ENCODE measurements at regions of chr11 and their contacts with region 1.

Region 1: DNA sequence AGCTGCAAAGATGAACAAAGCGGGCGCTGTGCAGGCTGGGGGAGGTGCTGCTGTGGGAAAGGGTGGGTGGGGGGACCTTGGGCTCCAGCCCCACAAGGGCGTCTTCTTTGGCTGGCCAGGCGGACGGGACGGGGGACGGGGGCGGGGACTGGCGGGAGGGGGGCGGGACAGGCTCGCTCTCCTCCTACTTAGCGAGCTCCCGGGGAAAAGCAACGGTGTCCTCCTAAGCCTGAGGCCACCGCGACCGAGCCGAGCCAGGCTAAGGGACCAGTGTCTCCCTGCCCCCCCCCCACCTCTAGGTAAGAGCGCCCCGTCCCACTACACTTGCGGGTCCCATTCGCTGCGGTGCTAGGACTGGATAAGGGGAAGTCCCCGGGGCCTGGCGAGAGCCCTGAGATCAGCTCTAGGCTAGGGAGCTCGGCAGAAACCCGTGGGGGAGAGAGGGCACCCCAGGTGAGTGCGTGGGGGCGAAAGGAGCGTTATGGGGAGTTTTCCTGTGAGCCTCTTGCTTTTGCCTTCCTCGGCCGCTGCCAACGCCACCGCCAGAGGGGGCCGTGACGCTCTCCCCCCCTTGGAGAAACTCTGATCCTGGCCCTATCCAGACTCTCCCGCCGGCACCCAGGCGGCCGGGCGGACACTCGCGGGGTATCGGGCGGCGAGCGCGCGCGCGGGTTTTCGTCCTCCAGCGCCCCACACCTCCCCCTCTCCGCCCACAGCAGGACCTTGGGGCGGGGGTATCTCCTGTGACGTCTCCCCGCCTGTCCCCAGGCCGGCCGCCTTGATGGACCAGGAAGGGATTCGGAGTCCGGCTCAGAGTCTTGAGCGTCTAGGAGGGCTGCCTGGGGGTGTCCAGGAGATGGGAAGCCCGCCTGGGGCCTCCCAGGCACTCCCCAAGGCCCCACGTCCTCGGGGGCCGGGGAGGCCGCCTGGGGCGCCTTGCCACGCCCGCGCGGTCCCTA is at the start of gene PHLDB1:
- DNase-seq: peak; percentile 64 to 67
- H3K4me3 ChIP-seq: peak within 1 kb of the TSS; percentile 40 to 75 (median 63)
- H3K27ac ChIP-seq: peak within 1 kb of the TSS; percentile 66 to 94 (median 87)
- H3K4me1 ChIP-seq: peaks cover 14 to 49% of the 10 kb centered on the region in 2 donors
- H3K27me3 ChIP-seq: no peaks in the 10 kb centered on the region
- CTCF ChIP-seq: peak in 4 of 6 experiments; percentile 19 to 48 (median 42)
- POLR2A ChIP-seq: peak in 1 of 2 donors; percentile 32
- total RNA-seq, gene PHLDB1: 73.2 to 158 (median 120) TPM

Region 2: DNA sequence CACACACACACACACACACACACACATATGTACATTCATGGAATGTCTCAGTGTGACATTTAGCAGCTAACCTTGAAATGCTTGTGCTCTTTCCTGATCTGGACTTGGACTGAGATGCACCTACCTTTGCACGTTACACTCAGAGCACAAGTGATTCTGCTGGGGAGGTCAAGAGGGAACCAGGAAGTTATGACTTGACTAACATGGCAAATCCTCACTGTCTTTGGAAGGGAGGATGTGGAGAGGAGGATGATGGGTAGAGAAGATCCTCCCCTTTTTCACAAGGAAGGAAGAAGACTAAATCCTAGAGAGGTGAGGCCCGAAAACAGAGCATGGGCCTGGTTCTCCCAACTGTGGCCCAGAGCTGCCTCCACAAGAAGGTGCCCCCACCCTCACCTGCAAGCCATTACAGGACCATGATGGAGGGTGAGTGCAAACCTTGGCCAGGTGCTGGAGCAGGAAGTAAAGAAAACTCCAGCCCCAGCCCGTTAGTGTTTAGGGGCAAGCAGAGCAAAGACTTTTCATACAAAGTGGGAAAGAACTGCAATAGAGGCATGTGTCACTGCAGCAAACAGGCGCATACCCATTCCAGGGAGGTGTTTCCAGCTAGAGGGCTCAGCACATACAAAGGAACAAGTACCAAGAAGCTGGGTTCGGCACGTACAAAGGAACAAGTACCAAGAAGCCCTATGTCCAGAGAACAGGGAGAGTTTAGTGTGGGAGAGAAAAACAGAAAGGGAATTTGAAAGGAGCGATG is 481.4 kb before region 1 on chr11:
- intact Hi-C with region 1: no loop called
- DNase-seq: no peak
- H3K4me3 ChIP-seq: no peak overlapping the region
- H3K27ac ChIP-seq: no peak overlapping the region
- H3K4me1 ChIP-seq: no peaks in the 10 kb centered on the region
- H3K27me3 ChIP-seq: no peaks in the 10 kb centered on the region
- CTCF ChIP-seq: no peak
- POLR2A ChIP-seq: no peak

Region 3: DNA sequence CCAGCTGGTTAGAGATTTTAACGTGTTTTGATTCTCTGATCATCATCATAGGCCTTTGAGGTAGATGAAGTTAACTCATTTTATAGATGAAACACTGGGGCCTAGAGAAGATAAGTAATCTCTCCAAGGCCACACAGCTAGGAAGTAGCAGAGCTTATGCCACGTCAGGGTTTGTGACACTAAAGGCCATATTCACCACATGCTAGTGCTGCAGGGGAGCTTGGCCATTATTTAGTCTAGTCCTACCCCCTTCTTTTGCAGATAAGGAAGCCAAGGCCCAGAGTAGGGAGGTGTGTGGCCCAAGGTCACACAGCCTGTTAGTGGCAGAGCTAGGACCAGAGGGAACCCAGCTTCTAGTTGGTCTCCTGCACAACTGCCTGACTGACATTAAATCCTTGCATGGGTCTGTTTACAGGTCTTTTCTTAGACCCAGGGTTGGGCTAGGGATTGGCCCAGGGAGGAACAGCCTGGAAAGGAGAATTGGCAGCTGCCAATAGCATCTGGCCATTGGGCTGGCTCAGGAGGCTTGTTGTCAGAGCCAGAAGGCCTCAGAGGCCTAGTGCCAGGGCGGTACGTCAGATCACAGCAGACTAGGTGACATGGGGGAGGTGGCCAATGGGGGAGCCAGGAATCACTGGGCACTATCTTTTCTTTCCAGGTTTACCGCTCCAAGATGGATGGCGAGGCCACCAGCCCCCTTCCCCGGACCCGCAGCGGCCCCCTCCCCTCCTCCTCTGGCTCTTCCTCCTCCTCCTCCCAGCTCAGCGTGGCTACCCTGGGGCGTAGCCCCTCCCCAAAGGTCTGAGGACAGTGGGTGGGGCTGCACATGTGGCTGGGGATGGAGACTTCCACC is 35.7 kb after region 1 on chr11:
- intact Hi-C with region 1: no loop called
- DNase-seq: no peak
- H3K4me3 ChIP-seq: no peak overlapping the region
- H3K27ac ChIP-seq: no peak overlapping the region
- H3K4me1 ChIP-seq: peaks cover 27 to 41% of the 10 kb centered on the region in 2 donors
- H3K27me3 ChIP-seq: no peaks in the 10 kb centered on the region
- CTCF ChIP-seq: no peak
- POLR2A ChIP-seq: no peak

Region 4: DNA sequence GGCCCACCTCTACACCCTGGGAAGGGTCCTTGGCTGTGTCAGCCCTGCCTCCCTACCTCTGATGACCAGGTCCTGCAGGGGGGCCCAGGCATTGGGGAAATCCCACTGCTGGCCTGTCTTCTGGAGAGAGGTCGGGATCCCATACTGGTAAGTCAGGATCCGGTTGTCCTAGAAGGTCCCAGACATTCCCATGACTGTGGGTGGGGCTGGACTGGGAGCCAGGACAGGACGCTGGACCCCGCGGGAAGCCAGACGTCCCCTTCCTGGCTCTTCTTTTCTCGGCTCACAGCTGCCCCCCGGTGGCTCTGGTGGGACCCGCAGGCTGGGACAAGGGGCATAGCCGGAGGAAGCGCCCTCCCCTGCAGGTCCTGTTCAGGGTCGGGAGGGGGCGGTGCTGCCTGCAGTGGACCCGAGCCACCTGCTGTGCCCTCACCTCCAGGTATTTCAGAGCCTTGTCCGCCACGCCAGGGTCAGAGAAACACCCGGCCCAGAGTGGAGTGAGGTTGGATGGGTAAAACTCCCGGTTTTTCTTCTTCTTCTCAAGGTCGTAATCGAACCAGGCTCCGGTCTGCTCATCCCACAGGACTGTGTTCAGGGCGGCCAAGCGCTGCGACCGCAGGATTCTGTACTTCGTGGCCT is 51.8 kb after region 1 on chr11:
- intact Hi-C with region 1: loop called (anchors 5 kb)
- DNase-seq: peak; percentile 93 to 96
- H3K4me3 ChIP-seq: no peak overlapping the region
- H3K27ac ChIP-seq: peak overlapping the region; percentile 14 to 58 (median 53)
- H3K4me1 ChIP-seq: peaks cover 0 to 18% of the 10 kb centered on the region in 2 donors
- H3K27me3 ChIP-seq: no peaks in the 10 kb centered on the region
- CTCF ChIP-seq: peak; percentile 95 to 100 (median 98)
- POLR2A ChIP-seq: peak in 1 of 2 donors; percentile 15

Region 5: DNA sequence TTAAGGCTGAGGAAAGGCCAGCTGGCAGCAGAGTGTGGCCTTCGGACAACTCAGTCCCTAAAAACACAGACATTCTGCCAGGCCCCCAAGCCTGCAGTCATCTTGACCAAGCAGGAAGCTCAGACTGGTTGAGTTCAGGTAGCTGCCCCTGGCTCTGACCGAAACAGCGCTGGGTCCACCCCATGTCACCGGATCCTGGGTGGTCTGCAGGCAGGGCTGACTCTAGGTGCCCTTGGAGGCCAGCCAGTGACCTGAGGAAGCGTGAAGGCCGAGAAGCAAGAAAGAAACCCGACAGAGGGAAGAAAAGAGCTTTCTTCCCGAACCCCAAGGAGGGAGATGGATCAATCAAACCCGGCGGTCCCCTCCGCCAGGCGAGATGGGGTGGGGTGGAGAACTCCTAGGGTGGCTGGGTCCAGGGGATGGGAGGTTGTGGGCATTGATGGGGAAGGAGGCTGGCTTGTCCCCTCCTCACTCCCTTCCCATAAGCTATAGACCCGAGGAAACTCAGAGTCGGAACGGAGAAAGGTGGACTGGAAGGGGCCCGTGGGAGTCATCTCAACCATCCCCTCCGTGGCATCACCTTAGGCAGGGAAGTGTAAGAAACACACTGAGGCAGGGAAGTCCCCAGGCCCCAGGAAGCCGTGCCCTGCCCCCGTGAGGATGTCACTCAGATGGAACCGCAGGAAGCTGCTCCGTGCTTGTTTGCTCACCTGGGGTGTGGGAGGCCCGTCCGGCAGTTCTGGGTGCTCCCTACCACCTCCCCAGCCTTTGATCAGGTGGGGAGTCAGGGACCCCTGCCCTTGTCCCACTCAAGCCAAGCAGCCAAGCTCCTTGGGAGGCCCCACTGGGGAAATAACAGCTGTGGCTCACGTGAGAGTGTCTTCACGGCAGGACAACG is 287.7 kb after region 1 on chr11:
- intact Hi-C with region 1: no loop called
- DNase-seq: peak; percentile 51 to 69
- H3K4me3 ChIP-seq: no peak overlapping the region
- H3K27ac ChIP-seq: peak overlapping the region in 1 of 3 donors; percentile 22
- H3K4me1 ChIP-seq: peaks cover 0 to 5% of the 10 kb centered on the region in 2 donors
- H3K27me3 ChIP-seq: no peaks in the 10 kb centered on the region
- CTCF ChIP-seq: no peak
- POLR2A ChIP-seq: no peak